T-cell (primary cell): ENCODE measurements at regions of chr4 and their contacts with region 1.

Region 1: DNA sequence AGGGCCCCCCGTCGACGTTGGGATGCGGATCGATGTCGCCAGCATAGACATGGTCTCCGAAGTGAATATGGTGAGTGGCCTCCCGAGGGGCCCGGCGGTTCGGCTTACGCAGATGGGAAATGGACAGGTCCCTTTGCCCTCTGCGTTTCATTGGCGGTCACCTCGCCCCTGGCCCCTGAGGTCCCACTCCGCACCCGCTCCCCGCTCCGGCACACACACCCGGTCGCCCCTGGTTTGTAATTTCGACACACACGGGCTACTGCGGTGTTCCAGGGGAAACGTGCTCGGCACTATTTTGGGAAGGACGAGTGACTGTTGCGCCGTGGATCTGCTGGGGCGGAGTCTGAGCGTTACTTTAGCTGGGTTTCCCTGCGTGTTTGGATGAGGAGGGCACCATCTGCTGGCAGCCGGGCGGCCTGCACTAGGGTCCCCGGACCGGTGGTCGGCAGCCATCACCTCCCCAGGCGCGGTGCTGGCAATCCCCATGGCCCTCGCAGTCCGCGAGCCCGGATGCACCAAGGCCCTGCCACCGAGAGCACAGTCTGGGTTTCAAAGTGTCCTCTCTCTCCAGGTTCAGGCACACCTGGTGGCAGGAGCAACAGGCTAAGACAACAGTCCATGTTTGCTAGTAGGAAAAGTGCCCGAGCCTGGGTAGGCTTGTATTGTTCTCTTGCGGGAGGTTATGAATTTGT is 1.2 kb downstream of the GABRB1 start:
- DNase-seq: peak in 26 of 35 experiments; percentile 0 to 45 (median 20)
- ATAC-seq: peak; percentile 51 to 85 (median 64)
- H3K4me3 ChIP-seq: peak overlapping the region; percentile 23 to 38
- H3K4me3 Mint-ChIP-seq: peak overlapping the region; percentile 55 to 80 (median 71)
- H3K27ac ChIP-seq: no peak overlapping the region
- H3K27ac Mint-ChIP-seq: no peak overlapping the region
- H3K4me1 ChIP-seq: peaks cover 0 to 20% of the 10 kb centered on the region in 2 experiments
- H3K4me1 Mint-ChIP-seq: peaks cover 15 to 23% (median 17%) of the 10 kb centered on the region in 3 donors
- H3K27me3 ChIP-seq: peaks cover 14 to 24% of the 10 kb centered on the region in 2 experiments
- H3K27me3 Mint-ChIP-seq: peaks cover 42 to 44% of the 10 kb centered on the region in 2 donors

Region 2: DNA sequence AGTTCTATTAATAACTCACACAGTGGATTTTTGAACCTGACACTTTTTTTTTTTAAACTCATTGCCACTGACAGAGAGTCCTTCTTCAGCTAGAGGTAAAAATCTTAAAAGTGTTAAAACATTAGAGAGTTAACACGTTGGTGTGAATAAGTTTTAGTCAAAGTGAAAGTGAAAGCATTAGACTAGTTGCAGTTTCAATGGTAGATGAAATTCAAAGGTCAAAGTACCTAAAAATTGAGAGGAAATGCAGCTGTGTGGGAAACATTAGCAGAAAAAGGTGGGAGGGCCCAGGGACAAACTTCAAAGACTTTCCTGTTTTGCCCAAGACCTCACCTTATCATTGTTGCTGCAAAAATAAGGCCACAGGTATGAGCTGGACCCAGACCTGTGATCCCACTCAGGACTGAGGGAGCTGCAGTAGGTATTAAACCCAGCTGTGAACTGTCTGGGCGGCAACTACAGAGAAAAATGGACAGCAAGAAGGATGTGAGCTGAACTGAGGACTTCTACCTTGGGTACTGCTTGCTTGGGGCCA is 21.6 kb before region 1 on chr4:
- CTCF ChIA-PET with region 1: no interaction called
- POLR2A ChIA-PET with region 1: no interaction called
- DNase-seq: peak in 1 of 35 experiments; percentile 25
- ATAC-seq: peak; percentile 23 to 65 (median 40)
- H3K4me3 ChIP-seq: no peak overlapping the region
- H3K4me3 Mint-ChIP-seq: peak overlapping the region; percentile 35 to 68 (median 38)
- H3K27ac ChIP-seq: peak overlapping the region; percentile 49
- H3K27ac Mint-ChIP-seq: peak overlapping the region; percentile 79 to 81
- H3K4me1 ChIP-seq: peaks cover 0 to 5% of the 10 kb centered on the region in 2 experiments
- H3K4me1 Mint-ChIP-seq: peaks cover 17 to 25% (median 22%) of the 10 kb centered on the region in 3 donors
- H3K27me3 ChIP-seq: no peaks in the 10 kb centered on the region
- H3K27me3 Mint-ChIP-seq: no peaks in the 10 kb centered on the region

Region 3: DNA sequence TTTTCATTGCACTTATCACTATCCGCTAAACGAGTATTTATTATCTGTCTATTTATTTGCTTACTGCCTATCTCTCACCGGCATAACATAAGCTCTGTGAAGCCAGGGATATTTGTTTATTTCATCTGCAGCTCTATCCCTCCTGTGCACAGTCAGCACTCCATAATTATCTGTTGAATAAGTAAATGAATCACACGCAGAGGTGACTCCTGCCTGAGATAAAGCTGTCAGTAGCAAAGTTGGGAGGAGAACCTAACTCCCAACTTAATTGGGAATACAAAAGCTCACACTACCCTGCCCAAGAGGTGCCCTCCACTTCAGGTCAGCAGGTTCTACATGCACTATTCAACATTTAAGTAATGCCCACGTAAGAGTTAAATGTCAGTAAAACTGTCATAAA is 719.7 kb after region 1 on chr4:
- CTCF ChIA-PET with region 1: no interaction called
- POLR2A ChIA-PET with region 1: interaction called in 1 of 2 experiments, 11 read pairs
- DNase-seq: no peak
- ATAC-seq: no peak
- H3K4me3 ChIP-seq: no peak overlapping the region
- H3K4me3 Mint-ChIP-seq: no peak overlapping the region
- H3K27ac ChIP-seq: no peak overlapping the region
- H3K27ac Mint-ChIP-seq: no peak overlapping the region
- H3K4me1 ChIP-seq: no peaks in the 10 kb centered on the region
- H3K4me1 Mint-ChIP-seq: no peaks in the 10 kb centered on the region
- H3K27me3 ChIP-seq: no peaks in the 10 kb centered on the region
- H3K27me3 Mint-ChIP-seq: peaks cover 8 to 38% of the 10 kb centered on the region in 2 donors

Region 4: DNA sequence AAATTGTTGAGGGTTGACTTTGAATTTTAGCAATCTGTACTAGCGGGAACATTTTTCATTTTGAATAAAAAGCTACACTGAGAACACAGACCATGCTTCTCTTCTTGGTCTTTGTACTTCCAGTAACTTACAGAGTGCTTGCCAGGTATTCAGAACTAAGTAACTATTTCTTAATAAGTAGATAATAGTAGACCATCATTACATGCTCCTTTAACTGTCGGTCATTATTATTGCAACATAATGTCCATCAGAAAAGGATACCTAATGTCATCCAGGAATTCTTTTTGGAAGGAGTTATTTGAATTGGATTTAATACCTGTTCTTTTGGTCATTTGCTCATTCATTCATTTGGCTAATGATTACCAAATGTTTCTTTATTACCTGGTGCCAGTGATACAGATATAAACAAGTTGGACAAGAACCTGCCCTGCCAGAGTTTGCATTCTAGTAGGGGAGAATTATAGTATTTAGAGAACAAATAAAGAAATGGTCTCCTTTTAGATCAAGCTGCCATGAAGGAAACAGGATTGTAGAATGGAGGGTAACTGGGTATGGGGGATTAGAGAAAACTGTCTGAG is 1986.2 kb after region 1 on chr4:
- CTCF ChIA-PET with region 1: no interaction called
- POLR2A ChIA-PET with region 1: no interaction called
- DNase-seq: no peak
- ATAC-seq: no peak
- H3K4me3 ChIP-seq: no peak overlapping the region
- H3K4me3 Mint-ChIP-seq: no peak overlapping the region
- H3K27ac ChIP-seq: no peak overlapping the region
- H3K27ac Mint-ChIP-seq: no peak overlapping the region
- H3K4me1 ChIP-seq: no peaks in the 10 kb centered on the region
- H3K4me1 Mint-ChIP-seq: no peaks in the 10 kb centered on the region
- H3K27me3 ChIP-seq: peaks cover 0 to 3% of the 10 kb centered on the region in 2 experiments
- H3K27me3 Mint-ChIP-seq: peaks cover 9 to 20% of the 10 kb centered on the region in 2 donors